GM10248 (cell line): ENCODE measurements at regions of chr2 and their contacts with region 1.

Region 1: GRCh38 chr2:37085731-37086147 is 1.4 kb downstream of the GPATCH11 start:
- DNase-seq: no peak
- CTCF ChIP-seq: no peak

Region 2: DNA sequence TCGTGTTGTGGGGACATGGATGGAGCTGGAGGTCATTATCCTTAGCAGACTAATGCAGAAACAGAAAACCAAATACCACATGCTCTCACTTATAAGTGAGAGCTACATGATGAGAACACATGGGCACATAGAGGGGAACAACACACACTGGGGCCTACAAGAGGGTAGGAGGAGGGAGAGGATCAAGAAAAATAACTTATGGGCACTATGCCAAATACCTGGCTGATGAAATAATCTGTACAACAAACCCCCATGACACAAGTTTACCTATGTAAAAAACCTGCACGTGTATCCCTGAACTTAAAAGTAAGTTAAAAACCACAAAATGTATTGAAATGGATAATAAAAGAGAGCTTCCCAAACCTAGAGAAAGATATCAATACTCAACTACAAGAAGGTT is 446.9 kb before region 1 on chr2:
- CTCF ChIA-PET with region 1: no interaction called
- POLR2A ChIA-PET with region 1: no interaction called
- DNase-seq: no peak
- CTCF ChIP-seq: no peak

Region 3: DNA sequence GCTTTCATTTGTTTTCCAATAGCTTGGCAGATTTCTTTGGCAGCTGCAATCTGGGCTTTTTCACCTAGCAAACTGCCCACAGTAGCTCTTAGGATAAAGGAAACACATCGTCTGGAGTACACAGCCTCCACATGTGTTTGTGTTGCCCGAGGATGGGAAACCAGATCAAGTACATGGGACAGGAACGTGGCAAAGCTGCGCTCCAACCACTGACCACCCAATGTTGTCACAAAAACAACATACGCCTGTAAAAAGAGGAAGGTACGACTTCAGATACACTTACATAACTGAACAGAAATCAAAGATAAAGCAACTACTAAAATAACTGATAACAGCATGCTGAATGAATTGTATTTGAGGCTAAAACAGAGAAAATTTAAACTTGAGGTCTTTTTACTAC is 17.1 kb before region 1 on chr2:
- CTCF ChIA-PET with region 1: no interaction called
- POLR2A ChIA-PET with region 1: no interaction called
- DNase-seq: no peak
- CTCF ChIP-seq: no peak

Region 4: DNA sequence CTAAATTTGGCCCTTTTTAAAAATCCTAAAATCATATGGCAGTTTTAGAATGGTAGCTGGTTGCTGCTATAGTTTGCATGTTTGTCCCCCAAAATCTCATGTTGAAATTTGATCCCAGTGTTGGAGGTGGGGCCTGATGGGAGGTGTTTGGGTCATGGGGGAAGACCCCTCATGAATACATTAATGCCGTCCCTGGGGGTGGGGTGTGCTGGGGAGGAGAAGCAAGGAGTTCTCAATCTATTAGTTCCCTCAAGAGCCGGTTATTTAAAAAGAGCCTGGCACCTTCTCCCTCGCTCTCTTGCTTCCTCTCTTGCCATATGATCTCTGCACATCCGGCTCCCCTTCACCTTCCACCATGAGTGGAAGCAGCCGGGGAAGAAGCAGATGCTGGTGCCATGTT is 19.4 kb after region 1 on chr2:
- CTCF ChIA-PET with region 1: no interaction called
- POLR2A ChIA-PET with region 1: no interaction called
- DNase-seq: no peak
- CTCF ChIP-seq: no peak

Region 5: DNA sequence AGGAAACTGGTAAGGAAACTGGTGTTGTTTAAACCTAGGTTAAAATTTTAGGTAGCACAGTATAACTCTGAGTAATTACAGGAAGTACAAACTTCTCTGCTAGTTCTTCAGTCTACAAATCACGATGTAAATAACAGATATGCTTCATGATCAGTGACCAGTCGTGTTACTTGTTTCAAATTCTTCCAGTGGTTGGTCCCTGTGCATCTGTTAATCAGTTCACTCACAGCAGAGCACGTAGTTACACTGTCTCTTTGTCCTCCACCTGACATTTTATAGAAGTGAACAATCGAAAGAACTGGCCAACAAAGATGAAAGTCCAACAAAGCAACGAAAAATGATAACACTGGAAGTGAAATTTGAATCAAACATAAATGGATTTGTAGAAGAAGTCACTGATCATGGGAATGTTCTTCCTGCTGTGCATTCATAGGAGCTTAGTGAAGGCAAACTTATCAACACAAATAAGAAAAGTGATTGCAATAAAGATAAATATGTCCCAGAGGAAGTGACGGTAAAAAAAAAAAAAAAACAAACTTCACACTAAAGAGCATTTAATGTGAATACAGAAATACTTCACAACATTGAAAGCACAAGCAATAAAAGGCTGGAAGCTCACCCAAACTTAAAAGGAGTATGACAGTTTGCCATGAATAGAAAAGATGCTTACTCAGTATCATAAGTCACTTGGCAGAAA is 64.0 kb after region 1 on chr2:
- CTCF ChIA-PET with region 1: no interaction called
- POLR2A ChIA-PET with region 1: interaction called, 11 read pairs
- DNase-seq: no peak
- CTCF ChIP-seq: no peak